HEK293 (cell line): ENCODE measurements at regions of chr15 and their contacts with region 1.

Region 1: DNA sequence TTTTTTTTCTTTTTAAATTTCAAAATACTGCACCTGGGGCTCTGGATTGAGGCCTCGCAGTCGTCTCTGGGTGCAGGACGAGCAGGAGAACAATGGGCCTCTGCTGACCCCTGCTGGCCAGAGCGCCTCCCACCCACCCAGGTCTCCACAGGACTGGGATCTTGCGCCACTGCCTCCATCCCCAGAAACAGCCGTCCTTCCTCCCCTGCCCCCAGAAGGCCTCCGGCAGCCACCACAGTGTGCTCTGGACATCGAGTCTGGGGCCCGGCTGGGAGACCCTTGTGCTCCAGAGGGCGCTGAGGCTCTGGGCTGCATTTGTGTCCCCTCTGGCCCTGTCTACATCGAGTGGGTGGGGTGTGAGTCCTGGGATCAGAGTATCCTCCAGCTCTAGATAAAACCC is 6.6 kb upstream of the ACSBG1 start:
- H3K4me3 ChIP-seq: no peak overlapping the region
- H3K27ac ChIP-seq: no peak overlapping the region
- H3K4me1 ChIP-seq: no peaks in the 10 kb centered on the region
- CTCF ChIP-seq: peak; percentile 86

Region 2: GRCh38 chr15:77907824-77908751 is 332.9 kb before region 1 on chr15:
- CTCF ChIA-PET with region 1: interaction called, 18 read pairs
- POLR2A ChIA-PET with region 1: no interaction called
- H3K4me3 ChIP-seq: no peak overlapping the region
- H3K27ac ChIP-seq: no peak overlapping the region; the same call in 1 of the 2 replicates
- H3K4me1 ChIP-seq: no peaks in the 10 kb centered on the region
- CTCF ChIP-seq: peak; percentile 66; the same call in 1 of the 2 replicates

Region 3: GRCh38 chr15:78000091-78000926 is 240.7 kb before region 1 on chr15:
- CTCF ChIA-PET with region 1: interaction called, 10 read pairs
- POLR2A ChIA-PET with region 1: no interaction called
- H3K4me3 ChIP-seq: no peak overlapping the region
- H3K27ac ChIP-seq: no peak overlapping the region
- H3K4me1 ChIP-seq: peaks cover 6% of the 10 kb centered on the region; the same call in 1 of the 2 replicates
- CTCF ChIP-seq: peak; percentile 87

Region 4: GRCh38 chr15:78177447-78177873 is 63.5 kb before region 1 on chr15:
- CTCF ChIA-PET with region 1: interaction called, 234 read pairs
- POLR2A ChIA-PET with region 1: no interaction called
- H3K4me3 ChIP-seq: no peak overlapping the region
- H3K27ac ChIP-seq: no peak overlapping the region
- H3K4me1 ChIP-seq: no peaks in the 10 kb centered on the region
- CTCF ChIP-seq: peak; percentile 71

Region 5: DNA sequence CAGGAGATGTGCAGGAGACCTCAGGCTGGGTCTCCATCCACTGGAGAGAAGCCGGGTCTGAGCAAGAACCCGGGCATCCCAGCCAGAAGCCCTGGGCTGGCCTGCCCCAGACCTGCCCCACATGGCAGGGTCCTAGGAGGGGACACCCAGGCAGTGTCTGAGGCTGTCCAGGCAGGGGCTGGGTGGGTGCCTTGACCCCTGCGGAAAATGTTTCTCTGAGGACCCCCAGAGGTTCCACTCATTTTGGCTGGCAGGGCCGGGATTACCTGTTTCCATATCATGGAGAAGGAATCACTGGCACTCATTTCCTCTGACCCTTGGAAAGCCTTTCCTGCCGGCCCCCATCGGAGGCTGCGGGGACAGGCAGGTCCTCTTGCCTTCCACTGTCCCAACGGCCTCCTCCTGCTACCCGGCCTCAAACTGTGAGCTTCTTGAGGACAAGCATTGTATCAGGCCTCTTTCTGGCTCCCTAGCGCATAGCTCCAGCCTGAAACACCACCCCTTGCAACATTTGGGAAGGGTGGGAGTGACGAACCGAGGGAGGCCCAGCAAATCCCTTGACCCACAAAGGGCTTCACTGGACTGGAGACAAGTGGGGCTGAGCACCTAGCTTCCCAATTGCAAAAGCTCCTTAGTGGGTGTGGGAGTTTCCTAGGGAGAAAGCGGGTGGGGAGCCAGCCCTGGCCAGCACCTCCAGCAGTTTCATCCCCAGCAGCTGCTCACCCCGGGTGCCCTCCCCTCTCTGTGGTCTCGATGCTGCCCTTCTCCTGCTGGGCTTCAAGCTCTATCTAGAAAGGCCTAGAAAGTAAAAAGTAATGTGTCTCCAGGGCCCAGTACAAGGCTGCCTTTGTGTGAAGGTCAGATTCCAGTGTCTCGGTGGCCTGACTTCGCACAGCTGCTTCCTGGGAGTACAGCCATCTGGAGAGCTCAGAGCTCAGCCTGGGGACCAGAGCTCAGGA is 36.4 kb before region 1 on chr15:
- CTCF ChIA-PET with region 1: interaction called, 56 read pairs
- POLR2A ChIA-PET with region 1: no interaction called
- H3K4me3 ChIP-seq: no peak overlapping the region
- H3K27ac ChIP-seq: no peak overlapping the region
- H3K4me1 ChIP-seq: no peaks in the 10 kb centered on the region
- CTCF ChIP-seq: no peak

Region 6: GRCh38 chr15:78259232-78259631 is 18.2 kb after region 1 on chr15:
- CTCF ChIA-PET with region 1: interaction called, 48 read pairs
- POLR2A ChIA-PET with region 1: no interaction called
- H3K4me3 ChIP-seq: no peak overlapping the region
- H3K27ac ChIP-seq: no peak overlapping the region
- H3K4me1 ChIP-seq: no peaks in the 10 kb centered on the region
- CTCF ChIP-seq: no peak

Region 7: GRCh38 chr15:78340231-78341056 is 99.4 kb after region 1 on chr15 and contains the start of gene CRABP1:
- CTCF ChIA-PET with region 1: no interaction called
- POLR2A ChIA-PET with region 1: no interaction called
- H3K4me3 ChIP-seq: peak within 1 kb of the TSS; percentile 31
- H3K27ac ChIP-seq: no peak within 1 kb of the TSS
- H3K4me1 ChIP-seq: peaks cover 5% of the 10 kb centered on the region; the same call in 1 of the 2 replicates
- CTCF ChIP-seq: no peak

Region 8: GRCh38 chr15:78457101-78457500 is 216.1 kb after region 1 on chr15:
- CTCF ChIA-PET with region 1: no interaction called
- POLR2A ChIA-PET with region 1: no interaction called
- H3K4me3 ChIP-seq: no peak overlapping the region
- H3K27ac ChIP-seq: no peak overlapping the region
- H3K4me1 ChIP-seq: peaks cover 53% of the 10 kb centered on the region
- CTCF ChIP-seq: no peak